RWPE1 (cell line): ENCODE measurements at regions of chr9 and their contacts with region 1.

Region 1: DNA sequence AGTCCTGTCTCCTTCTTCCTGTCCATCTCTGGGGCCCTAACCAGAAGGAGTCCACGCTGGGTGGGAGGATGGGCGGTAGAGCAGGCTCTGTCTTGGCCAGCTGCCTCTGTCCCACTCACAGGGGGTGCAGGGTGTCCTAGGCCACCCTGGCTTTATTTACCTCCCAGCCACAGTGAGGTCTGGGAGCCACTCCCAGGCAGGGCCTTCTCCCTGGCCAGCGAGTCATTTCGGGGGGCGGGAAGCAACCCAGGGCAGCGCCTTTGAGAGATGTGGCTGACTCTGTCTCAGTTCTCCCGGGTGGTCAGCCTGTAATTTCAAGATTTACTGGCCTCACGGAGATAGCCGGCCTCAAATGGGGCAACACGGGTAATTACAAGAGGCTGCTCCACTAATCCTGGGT is 67.4 kb upstream of the PTCH1 start:
- DNase-seq: no peak
- H3K27ac ChIP-seq: no peak overlapping the region
- CTCF ChIP-seq: no peak

Region 2: DNA sequence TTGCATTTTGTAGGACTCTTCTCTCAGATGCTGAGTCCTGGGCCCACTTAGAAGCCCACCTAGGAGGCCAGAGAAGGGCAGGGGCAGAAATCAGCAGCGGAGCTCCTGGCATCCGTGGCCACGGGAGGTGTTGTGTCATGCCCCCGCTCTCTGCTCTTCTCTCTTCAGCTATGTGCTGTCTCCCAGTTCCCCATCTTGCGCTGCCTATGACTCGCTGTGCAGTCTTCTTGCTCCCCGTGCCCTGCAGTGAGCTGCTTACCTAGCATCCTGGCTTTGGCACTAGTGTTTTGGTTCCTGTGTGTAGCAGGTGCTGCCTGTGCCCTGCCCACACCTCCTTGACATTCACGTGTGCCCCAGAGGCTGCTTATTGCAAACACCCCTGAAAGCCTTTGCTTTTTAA is 19.3 kb after region 1 on chr9:
- CTCF ChIA-PET with region 1: no interaction called
- POLR2A ChIA-PET with region 1: interaction called, 10 read pairs
- DNase-seq: no peak
- H3K27ac ChIP-seq: no peak overlapping the region
- CTCF ChIP-seq: no peak

Region 3: GRCh38 chr9:95696701-95697100 is 112.5 kb after region 1 on chr9:
- CTCF ChIA-PET with region 1: no interaction called
- POLR2A ChIA-PET with region 1: no interaction called
- DNase-seq: no peak
- H3K27ac ChIP-seq: no peak overlapping the region
- CTCF ChIP-seq: no peak

Region 4: DNA sequence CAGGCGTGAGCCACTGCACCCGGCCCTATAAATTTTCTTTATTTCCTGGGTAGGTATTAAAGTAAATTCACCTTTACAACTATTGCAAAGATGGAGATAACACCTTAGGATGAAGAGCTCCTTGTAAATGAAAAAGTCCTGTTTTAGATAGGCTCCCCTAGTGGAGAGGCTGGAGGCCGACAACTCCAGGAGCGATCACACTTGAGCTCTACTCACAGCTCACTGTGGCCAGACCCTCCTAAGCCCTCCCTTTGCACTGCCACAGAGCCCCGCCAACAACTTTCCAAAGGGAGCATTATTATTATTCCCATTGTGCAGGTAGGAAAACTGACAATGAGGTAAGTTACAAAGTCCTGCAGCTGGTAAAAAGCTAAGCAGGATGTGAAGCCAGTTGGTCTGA is 152.2 kb after region 1 on chr9:
- CTCF ChIA-PET with region 1: no interaction called
- POLR2A ChIA-PET with region 1: no interaction called
- DNase-seq: peak; percentile 24
- H3K27ac ChIP-seq: no peak overlapping the region
- CTCF ChIP-seq: peak; percentile 38; the same call in 1 of the 2 replicates